ENCODE measurements at regions of chr18 and their contacts with region 1.

Region 1: DNA sequence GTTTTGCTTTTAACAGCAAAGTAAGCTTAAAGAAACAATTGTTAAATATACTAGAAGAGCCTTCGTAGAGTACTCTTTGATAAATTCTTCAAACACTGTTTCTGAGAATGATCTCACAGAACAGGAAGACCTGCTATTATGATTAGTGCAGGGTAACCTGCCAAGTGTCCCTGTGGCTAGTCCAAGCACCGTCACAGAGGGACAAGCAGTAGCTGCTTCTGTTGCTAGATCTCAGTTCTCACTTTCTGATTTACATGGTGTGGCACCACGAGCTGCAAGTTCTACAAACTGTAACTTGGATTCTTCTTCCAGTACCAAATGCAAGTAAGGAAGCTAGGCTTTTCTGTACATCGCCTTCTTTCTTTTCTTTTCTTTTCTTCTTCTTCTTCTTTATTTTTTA is 121.5 kb downstream of the PIEZO2 start:
- DNase-seq: peak; percentile 68
- ATAC-seq: peak; percentile 99
- H3K4me3 ChIP-seq: no peak overlapping the region
- H3K27ac ChIP-seq: peak overlapping the region; percentile 73
- H3K4me1 ChIP-seq: peaks cover 25% of the 10 kb centered on the region
- H3K27me3 ChIP-seq: no peaks in the 10 kb centered on the region
- CTCF ChIP-seq: no peak
- EP300 ChIP-seq: peak in 1 of 2 experiments; percentile 45; a peak in 1 of 4 replicates
- POLR2A ChIP-seq: peak; percentile 49
- RAD21 ChIP-seq: no peak

Region 2: GRCh38 chr18:11005528-11005927 is 22.3 kb before region 1 on chr18:
- CTCF ChIA-PET with region 1: interaction called, 4 read pairs
- POLR2A ChIA-PET with region 1: interaction called, 16 read pairs
- RAD21 ChIA-PET with region 1: interaction called, 18 read pairs
- SMC1A ChIA-PET with region 1: interaction called, 14 read pairs
- in situ Hi-C with region 1: no loop called
- intact Hi-C with region 1: no loop called
- DNase-seq: peak; percentile 58
- ATAC-seq: peak; percentile 76
- H3K4me3 ChIP-seq: no peak overlapping the region
- H3K27ac ChIP-seq: peak overlapping the region; percentile 82
- H3K4me1 ChIP-seq: peaks cover 31% of the 10 kb centered on the region
- H3K27me3 ChIP-seq: no peaks in the 10 kb centered on the region
- CTCF ChIP-seq: no peak
- EP300 ChIP-seq: peak in 1 of 2 experiments; percentile 76; a peak in 2 of 4 replicates
- POLR2A ChIP-seq: no peak
- RAD21 ChIP-seq: no peak